ENCODE measurements at regions of chr10 and their contacts with region 1.

Region 1: GRCh38 chr10:72834183-72834825 is 59.2 kb upstream of the OIT3 start:
- DNase-seq: peak; percentile 80
- H3K4me3 ChIP-seq: no peak overlapping the region
- H3K27ac ChIP-seq: no peak overlapping the region
- H3K4me1 ChIP-seq: peaks cover 5% of the 10 kb centered on the region
- H3K27me3 ChIP-seq: no peaks in the 10 kb centered on the region
- CTCF ChIP-seq: peak; percentile 40 to 46
- POLR2A ChIP-seq: no peak

Region 2: DNA sequence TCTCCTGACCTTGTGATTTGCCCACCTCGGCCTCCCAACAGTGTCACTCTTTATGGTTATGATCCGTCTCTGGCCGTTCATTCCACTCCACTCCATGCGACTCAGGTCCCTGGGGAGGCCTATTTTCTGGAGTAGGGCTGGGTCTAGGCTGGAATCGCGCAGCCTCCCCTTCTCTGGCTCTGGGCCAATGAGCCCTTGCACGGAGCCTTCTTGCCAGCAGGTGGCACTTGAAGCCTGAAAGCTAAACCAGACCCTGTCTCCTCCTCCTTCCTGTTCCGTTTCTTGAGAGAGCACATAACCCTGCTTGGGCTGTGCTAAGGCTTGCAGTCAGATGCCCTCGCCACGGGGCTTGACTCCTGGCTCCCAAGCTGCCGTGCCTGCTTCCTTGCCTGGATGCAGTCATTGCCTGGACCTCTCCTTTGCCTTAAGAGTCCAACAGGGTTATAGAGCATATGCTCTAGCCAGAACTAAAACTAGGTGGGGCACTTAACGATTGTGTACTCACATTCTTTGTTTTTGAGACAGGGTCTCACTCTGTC is 470.0 kb before region 1 on chr10:
- CTCF ChIA-PET with region 1: interaction called, 79 read pairs
- POLR2A ChIA-PET with region 1: no interaction called
- dilution Hi-C with region 1: no loop called
- intact Hi-C with region 1: loop called (anchors 1 kb)
- DNase-seq: peak; percentile 87
- H3K4me3 ChIP-seq: no peak overlapping the region
- H3K27ac ChIP-seq: peak overlapping the region; percentile 4
- H3K4me1 ChIP-seq: peaks cover 4% of the 10 kb centered on the region
- H3K27me3 ChIP-seq: no peaks in the 10 kb centered on the region
- CTCF ChIP-seq: peak; percentile 89 to 95
- POLR2A ChIP-seq: peak; percentile 74

Region 3: GRCh38 chr10:72375585-72375984 is 458.7 kb before region 1 on chr10:
- CTCF ChIA-PET with region 1: interaction called, 31 read pairs
- POLR2A ChIA-PET with region 1: no interaction called
- dilution Hi-C with region 1: no loop called
- intact Hi-C with region 1: no loop called
- DNase-seq: no peak
- H3K4me3 ChIP-seq: no peak overlapping the region
- H3K27ac ChIP-seq: no peak overlapping the region
- H3K4me1 ChIP-seq: no peaks in the 10 kb centered on the region
- H3K27me3 ChIP-seq: no peaks in the 10 kb centered on the region
- CTCF ChIP-seq: peak in 1 of 2 donors; percentile 12
- POLR2A ChIP-seq: no peak

Region 4: DNA sequence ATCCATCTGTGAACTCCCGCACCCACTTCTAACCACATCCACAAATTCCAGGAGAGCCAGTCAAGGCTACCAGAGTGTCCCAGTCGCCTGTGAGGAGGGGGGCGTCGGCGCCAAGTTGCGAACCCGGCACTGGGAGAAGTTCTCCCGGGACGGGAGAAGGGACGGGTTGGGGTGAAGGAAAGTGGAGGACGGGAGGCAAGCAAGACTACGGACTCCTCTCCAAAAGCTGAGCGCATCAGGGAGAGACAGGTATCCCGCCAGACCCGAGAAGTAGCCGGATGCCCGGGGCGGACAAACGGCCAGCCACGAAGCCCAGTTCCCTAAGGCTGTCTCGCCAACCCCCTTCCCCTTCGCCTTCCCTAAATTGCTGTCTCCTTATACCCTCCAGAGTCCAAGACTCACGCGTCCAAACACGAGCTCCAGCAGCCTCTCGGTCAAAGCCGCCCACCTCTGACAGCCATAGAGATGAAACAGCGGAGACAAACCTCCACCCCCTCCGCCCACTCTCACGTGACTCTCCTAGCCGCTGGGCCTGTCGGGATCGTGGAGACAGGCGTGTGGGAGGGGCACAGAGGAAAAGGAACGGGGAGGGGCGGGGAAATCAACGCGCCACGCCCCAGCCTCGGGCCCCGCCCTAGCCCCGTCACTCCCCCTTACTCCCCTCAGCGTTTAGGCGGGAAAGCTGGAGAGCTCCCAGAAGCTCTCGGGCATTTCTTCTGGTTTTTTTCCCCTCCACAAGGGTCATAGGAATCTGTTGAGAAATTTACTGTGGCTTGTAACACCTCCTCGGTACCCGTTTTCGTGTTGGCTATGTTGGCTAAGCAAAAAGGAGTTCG is 208.5 kb before region 1 on chr10 and contains the start of gene MICU1:
- CTCF ChIA-PET with region 1: interaction called, 16 read pairs
- POLR2A ChIA-PET with region 1: no interaction called
- dilution Hi-C with region 1: no loop called
- intact Hi-C with region 1: loop called (anchors 5 kb)
- DNase-seq: peak; percentile 97
- H3K4me3 ChIP-seq: peak within 1 kb of the TSS; percentile 60 to 92 (median 83)
- H3K27ac ChIP-seq: peak within 1 kb of the TSS; percentile 61
- H3K4me1 ChIP-seq: peaks cover 11% of the 10 kb centered on the region
- H3K27me3 ChIP-seq: no peaks in the 10 kb centered on the region
- CTCF ChIP-seq: no peak
- POLR2A ChIP-seq: peak; percentile 82
- total RNA-seq, gene MICU1: 42.3 and 48.0 TPM in 2 replicates

Region 5: DNA sequence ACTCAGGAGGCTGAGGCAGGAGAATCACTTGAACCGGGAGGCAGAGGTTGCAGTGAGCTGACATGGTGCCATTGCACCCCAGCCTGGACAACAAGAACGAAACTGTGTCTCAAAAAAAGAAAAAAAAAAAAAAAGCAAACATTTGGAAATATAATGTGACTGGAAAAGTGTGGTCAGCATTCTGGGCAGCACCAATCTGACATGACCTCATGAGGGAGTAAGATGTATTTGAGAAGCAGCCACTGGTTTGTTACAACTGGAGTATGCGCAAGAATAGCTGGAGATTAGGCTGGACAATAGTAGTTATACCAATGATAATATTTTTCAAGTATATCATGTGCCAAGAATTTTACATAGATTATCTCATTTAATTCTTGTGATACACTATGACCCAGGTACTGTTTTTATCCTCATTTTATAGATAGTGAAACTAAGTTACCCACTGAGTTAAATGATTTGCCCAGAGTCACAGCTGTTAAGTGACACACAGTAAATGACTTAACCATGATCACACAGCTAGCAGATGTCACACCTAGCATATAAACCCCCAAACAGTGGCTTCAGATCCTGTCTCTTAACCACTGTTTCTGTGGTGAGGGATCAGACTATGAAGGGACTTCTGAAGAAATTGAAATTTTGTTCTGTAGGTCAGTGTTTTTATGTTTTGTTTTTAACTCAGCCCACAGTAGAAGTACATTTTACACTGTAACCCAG is 131.3 kb before region 1 on chr10:
- CTCF ChIA-PET with region 1: interaction called, 133 read pairs
- POLR2A ChIA-PET with region 1: no interaction called
- dilution Hi-C with region 1: no loop called
- intact Hi-C with region 1: no loop called
- DNase-seq: peak; percentile 49
- H3K4me3 ChIP-seq: no peak overlapping the region
- H3K27ac ChIP-seq: no peak overlapping the region
- H3K4me1 ChIP-seq: peaks cover under 1% of the 10 kb centered on the region
- H3K27me3 ChIP-seq: no peaks in the 10 kb centered on the region
- CTCF ChIP-seq: no peak
- POLR2A ChIP-seq: no peak

Region 6: DNA sequence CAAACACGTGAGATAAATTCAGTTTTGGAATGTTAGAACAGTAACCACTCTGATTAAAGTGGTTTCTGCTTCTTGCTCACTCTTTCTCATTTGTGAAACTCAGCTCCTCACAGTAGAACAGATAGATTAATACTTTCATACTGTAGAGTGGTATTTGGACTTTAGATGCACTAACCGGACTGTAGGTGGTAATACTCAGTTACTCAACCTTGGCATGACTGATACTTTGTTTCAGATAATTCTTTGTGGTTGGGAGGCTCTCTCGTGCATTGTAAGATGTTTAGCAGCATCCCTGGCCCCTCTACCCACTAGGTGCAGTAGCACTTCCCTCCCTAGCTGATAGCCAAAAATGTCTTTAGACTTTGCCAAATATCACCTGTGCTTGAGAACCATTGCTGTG is 104.8 kb before region 1 on chr10:
- CTCF ChIA-PET with region 1: interaction called, 3 read pairs
- POLR2A ChIA-PET with region 1: no interaction called
- dilution Hi-C with region 1: no loop called
- intact Hi-C with region 1: loop called (anchors 10 kb)
- DNase-seq: no peak
- H3K4me3 ChIP-seq: no peak overlapping the region
- H3K27ac ChIP-seq: no peak overlapping the region
- H3K4me1 ChIP-seq: no peaks in the 10 kb centered on the region
- H3K27me3 ChIP-seq: no peaks in the 10 kb centered on the region
- CTCF ChIP-seq: no peak
- POLR2A ChIP-seq: no peak

Region 7: GRCh38 chr10:73060738-73061635 is 226.7 kb after region 1 on chr10:
- CTCF ChIA-PET with region 1: interaction called, 21 read pairs
- POLR2A ChIA-PET with region 1: no interaction called
- dilution Hi-C with region 1: no loop called
- intact Hi-C with region 1: loop called (anchors 1 kb)
- DNase-seq: peak; percentile 59
- H3K4me3 ChIP-seq: no peak overlapping the region
- H3K27ac ChIP-seq: no peak overlapping the region
- H3K4me1 ChIP-seq: peaks cover 9% of the 10 kb centered on the region
- H3K27me3 ChIP-seq: no peaks in the 10 kb centered on the region
- CTCF ChIP-seq: peak in 1 of 2 donors; percentile 40
- POLR2A ChIP-seq: no peak

Region 8: GRCh38 chr10:73131301-73131700 is 297.0 kb after region 1 on chr10:
- CTCF ChIA-PET with region 1: no interaction called
- POLR2A ChIA-PET with region 1: no interaction called
- dilution Hi-C with region 1: no loop called
- intact Hi-C with region 1: no loop called
- DNase-seq: no peak
- H3K4me3 ChIP-seq: no peak overlapping the region
- H3K27ac ChIP-seq: no peak overlapping the region
- H3K4me1 ChIP-seq: no peaks in the 10 kb centered on the region
- H3K27me3 ChIP-seq: no peaks in the 10 kb centered on the region
- CTCF ChIP-seq: no peak
- POLR2A ChIP-seq: no peak

Region 9: DNA sequence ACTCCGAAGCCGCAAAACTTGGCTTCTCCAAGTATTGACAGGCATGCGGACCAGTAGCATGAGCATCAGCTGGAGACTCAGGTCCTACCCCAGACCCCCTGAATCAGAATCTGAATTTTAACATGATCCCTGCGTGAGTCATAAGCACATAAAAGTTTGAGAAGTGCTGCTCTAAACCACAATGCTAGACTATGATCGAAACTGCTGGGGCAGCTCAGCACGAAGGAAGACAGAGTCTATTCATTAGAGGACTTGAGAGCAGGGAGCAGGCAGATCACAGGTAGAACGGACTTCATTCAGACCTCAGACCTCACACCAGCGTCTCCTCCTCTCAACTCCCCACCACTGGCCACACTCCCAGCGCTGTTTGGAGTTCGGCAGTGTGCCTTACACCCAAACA is 1023.1 kb after region 1 on chr10:
- CTCF ChIA-PET with region 1: no interaction called
- POLR2A ChIA-PET with region 1: no interaction called
- dilution Hi-C with region 1: no loop called
- intact Hi-C with region 1: no loop called
- DNase-seq: no peak
- H3K4me3 ChIP-seq: no peak overlapping the region
- H3K27ac ChIP-seq: no peak overlapping the region
- H3K4me1 ChIP-seq: no peaks in the 10 kb centered on the region
- H3K27me3 ChIP-seq: no peaks in the 10 kb centered on the region
- CTCF ChIP-seq: no peak
- POLR2A ChIP-seq: no peak